Activated CD8-positive, alpha-beta T cell treated with anti-CD3 and anti-CD28 coated beads for 36 hours (primary cell): ENCODE measurements at regions of chr1 and their contacts with region 1.

Region 1: DNA sequence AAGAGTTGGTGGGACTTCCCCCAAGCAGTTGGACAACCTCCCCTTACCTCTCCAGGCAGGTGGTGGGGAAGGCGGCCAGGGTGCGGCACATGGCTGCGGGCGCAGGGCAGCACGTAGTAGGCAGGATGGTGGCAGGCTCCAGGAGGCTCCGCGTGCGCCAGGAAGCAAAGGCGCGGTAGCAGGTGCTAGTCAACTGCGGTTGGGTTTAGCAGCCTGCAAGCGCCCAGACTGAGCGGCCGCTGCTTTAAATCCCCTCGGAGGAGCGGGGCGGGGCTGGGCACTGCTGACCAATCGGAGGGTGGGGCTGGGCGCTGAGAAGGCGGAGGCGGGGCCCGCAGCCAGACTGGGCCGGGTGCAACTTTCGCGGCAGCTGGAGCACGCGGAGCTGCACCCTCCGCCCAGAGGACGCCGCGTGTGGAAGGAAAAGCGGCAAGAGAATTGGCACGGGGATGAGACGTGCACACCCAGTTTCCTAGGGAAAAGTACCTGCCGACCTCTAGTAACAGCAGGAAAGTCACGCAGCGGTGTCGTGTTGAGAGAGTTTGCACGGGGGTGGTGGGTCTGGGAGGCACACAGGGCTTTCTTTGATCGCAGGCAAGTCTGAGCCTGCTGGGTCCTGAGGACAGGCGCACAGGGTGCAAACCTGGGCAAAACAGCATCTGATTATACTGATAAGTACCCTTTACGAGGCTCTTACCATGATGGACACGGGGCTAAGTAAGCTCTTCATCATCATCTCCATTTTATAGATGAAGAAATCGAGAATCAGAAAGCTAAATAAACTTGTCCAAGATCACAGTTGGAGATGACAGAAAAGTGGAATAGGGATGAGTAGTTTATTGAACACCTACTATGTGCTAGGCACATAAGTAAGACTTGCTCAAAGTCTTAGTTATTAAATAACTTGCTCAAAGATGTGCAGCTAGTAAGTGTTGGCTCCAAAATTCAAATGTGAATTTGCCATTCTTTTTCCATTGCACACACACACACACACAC is at the start of gene RGS16:
- DNase-seq: peak; percentile 97
- ATAC-seq: peak; percentile 93
- H3K4me3 Mint-ChIP-seq: peak within 1 kb of the TSS; percentile 2
- H3K27ac Mint-ChIP-seq: no peak within 1 kb of the TSS
- H3K4me1 Mint-ChIP-seq: peaks cover 41% of the 10 kb centered on the region
- H3K27me3 Mint-ChIP-seq: peaks cover 29% of the 10 kb centered on the region
- CTCF ChIP-seq: no peak
- total RNA-seq, gene RGS16: 33.8 to 35.6 TPM

Region 2: GRCh38 chr1:182614796-182615454 is 10.5 kb after region 1 on chr1:
- CTCF ChIA-PET with region 1: interaction called, 53 read pairs
- POLR2A ChIA-PET with region 1: interaction called, 33 read pairs
- intact Hi-C with region 1: no loop called
- DNase-seq: peak; percentile 84
- ATAC-seq: peak; percentile 31
- H3K4me3 Mint-ChIP-seq: peak overlapping the region; percentile 77
- H3K27ac Mint-ChIP-seq: peak overlapping the region; percentile 89
- H3K4me1 Mint-ChIP-seq: peaks cover 57% of the 10 kb centered on the region
- H3K27me3 Mint-ChIP-seq: peaks cover 45% of the 10 kb centered on the region
- CTCF ChIP-seq: no peak

Region 3: DNA sequence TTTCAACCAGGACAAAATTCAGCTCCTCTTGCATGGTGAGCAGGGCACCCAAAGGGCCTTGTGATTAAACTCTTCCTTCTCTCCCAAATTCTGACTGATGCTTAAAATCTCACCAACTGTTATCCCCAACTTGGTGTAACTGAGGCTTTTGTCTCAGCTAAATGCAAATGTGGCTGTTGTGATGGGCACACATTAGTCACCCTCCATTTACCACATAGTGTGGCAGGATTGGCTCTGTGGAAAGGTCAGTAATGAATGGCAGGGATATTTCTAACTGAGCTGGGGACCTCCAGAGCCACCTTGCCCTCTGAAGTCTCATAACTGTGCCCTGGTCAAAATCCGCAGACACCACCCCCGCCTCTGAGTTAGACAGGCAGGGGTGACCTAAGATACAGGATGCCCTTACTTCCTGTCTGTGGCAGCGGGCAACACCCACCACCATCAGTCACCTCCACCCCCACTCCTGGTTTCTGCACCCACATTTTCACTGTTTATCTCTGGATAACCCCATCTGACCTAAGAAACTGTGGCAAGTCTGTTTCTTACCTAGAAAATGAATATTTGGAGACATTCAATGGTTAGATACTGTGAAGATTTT is 25.1 kb after region 1 on chr1:
- CTCF ChIA-PET with region 1: interaction called, 13 read pairs
- POLR2A ChIA-PET with region 1: interaction called, 11 read pairs
- intact Hi-C with region 1: no loop called
- DNase-seq: peak; percentile 93
- ATAC-seq: peak; percentile 95
- H3K4me3 Mint-ChIP-seq: no peak overlapping the region
- H3K27ac Mint-ChIP-seq: peak overlapping the region; percentile 22
- H3K4me1 Mint-ChIP-seq: peaks cover 56% of the 10 kb centered on the region
- H3K27me3 Mint-ChIP-seq: peaks cover 17% of the 10 kb centered on the region
- CTCF ChIP-seq: no peak

Region 4: DNA sequence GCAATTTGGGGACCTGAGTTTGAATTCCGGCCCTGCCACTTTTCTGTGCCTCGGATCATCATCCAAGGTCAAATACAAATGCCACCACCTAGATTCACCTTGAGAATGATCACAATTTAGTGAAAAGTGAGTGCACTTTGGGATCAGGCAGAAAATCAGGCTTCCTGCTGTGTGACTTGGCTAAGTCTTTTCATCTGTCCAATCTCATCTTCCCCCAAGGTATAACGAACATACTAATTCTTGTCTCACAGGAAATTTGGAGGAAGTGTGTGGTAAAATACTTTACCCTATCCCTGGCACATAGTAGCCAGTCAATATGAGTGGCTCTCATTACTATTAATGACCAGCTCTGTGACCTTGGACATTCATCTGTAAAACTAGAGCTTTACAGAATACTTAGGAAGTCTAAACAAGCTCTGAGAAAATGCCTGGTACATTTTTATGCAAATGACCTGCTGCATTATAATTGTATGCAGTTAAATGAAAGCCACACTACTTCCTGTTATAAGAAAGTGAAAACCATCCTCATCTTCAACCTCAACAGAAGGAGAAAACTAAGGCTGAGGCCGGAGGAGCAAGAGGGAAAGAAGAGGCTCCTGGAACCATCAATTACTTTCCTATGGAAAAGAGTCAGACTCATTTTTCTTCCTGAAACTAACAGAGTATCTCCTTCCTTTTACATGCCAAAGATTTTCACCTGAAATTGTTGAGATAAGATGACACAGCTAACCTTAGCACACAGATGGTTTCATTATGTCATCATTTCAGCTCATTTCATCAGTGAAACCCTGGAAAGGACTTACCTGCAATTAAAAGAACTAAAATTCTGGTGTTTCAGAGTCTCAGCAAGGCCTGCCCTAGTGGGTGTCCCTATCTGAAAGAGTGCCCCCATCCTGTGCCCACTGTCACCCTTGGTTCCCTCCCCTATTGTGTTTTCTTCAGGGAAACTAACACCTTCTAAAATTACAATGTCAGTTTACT is 112.6 kb after region 1 on chr1:
- CTCF ChIA-PET with region 1: interaction called, 8 read pairs
- POLR2A ChIA-PET with region 1: interaction called, 5 read pairs
- intact Hi-C with region 1: loop called (anchors 5 kb)
- DNase-seq: peak; percentile 11
- ATAC-seq: peak; percentile 24
- H3K4me3 Mint-ChIP-seq: no peak overlapping the region
- H3K27ac Mint-ChIP-seq: peak overlapping the region; percentile 61
- H3K4me1 Mint-ChIP-seq: peaks cover 55% of the 10 kb centered on the region
- H3K27me3 Mint-ChIP-seq: peaks cover 3% of the 10 kb centered on the region
- CTCF ChIP-seq: no peak